MCF 10A (cell line): ENCODE measurements at regions of chr7 and their contacts with region 1.

Region 1: GRCh38 chr7:116929914-116930913 is 23.1 kb upstream of the ST7 start:
- DNase-seq: peak; percentile 84
- H3K4me3 Mint-ChIP-seq: no peak overlapping the region
- H3K27ac Mint-ChIP-seq: no peak overlapping the region
- H3K4me1 Mint-ChIP-seq: peaks cover 6% of the 10 kb centered on the region
- H3K27me3 Mint-ChIP-seq: no peaks in the 10 kb centered on the region
- CTCF ChIP-seq: peak; percentile 84

Region 2: GRCh38 chr7:116942504-116942903 is 12.3 kb after region 1 on chr7:
- CTCF ChIA-PET with region 1: interaction called, 11 read pairs
- POLR2A ChIA-PET with region 1: interaction called, 3 read pairs
- intact Hi-C with region 1: no loop called
- DNase-seq: no peak
- H3K4me3 Mint-ChIP-seq: no peak overlapping the region
- H3K27ac Mint-ChIP-seq: no peak overlapping the region
- H3K4me1 Mint-ChIP-seq: no peaks in the 10 kb centered on the region
- H3K27me3 Mint-ChIP-seq: no peaks in the 10 kb centered on the region
- CTCF ChIP-seq: no peak

Region 3: DNA sequence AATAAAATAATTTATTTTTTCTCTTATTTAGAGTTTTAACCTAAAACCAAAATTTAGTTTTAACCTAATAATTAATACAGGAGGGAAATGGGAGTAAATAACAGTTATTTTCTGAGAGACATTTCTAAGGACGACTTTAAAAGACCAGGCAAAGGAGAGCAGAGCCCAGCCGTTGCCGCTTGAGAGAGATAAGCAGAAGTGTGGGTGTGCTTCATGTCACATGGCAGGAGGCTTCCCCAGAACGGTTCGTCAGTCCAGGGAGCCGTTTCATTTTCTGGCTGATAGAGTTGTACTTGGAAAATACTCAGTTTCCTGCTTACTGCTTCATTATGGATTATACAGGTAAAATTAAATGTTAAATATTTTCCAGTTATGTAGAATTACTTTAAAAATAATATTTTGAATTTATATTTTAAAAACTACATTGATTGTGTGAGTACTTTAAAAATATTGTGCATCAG is 84.5 kb after region 1 on chr7:
- CTCF ChIA-PET with region 1: interaction called, 17 read pairs
- POLR2A ChIA-PET with region 1: interaction called, 3 read pairs
- intact Hi-C with region 1: loop called (anchors 1 kb)
- DNase-seq: no peak
- H3K4me3 Mint-ChIP-seq: no peak overlapping the region
- H3K27ac Mint-ChIP-seq: no peak overlapping the region
- H3K4me1 Mint-ChIP-seq: peaks cover 12% of the 10 kb centered on the region
- H3K27me3 Mint-ChIP-seq: no peaks in the 10 kb centered on the region
- CTCF ChIP-seq: no peak

Region 4: GRCh38 chr7:117071551-117071950 is 141.3 kb after region 1 on chr7:
- CTCF ChIA-PET with region 1: no interaction called
- POLR2A ChIA-PET with region 1: no interaction called
- intact Hi-C with region 1: no loop called
- DNase-seq: no peak
- H3K4me3 Mint-ChIP-seq: no peak overlapping the region
- H3K27ac Mint-ChIP-seq: no peak overlapping the region
- H3K4me1 Mint-ChIP-seq: peaks cover 10% of the 10 kb centered on the region
- H3K27me3 Mint-ChIP-seq: no peaks in the 10 kb centered on the region
- CTCF ChIP-seq: no peak

Region 5: GRCh38 chr7:117127585-117128168 is 197.5 kb after region 1 on chr7:
- CTCF ChIA-PET with region 1: interaction called, 91 read pairs
- POLR2A ChIA-PET with region 1: interaction called, 3 read pairs
- intact Hi-C with region 1: loop called (anchors 1 kb)
- DNase-seq: peak; percentile 73
- H3K4me3 Mint-ChIP-seq: no peak overlapping the region
- H3K27ac Mint-ChIP-seq: no peak overlapping the region
- H3K4me1 Mint-ChIP-seq: peaks cover 18% of the 10 kb centered on the region
- H3K27me3 Mint-ChIP-seq: no peaks in the 10 kb centered on the region
- CTCF ChIP-seq: peak; percentile 72